PC-3 (cell line): ENCODE measurements at regions of chr7 and their contacts with region 1.

Region 1: DNA sequence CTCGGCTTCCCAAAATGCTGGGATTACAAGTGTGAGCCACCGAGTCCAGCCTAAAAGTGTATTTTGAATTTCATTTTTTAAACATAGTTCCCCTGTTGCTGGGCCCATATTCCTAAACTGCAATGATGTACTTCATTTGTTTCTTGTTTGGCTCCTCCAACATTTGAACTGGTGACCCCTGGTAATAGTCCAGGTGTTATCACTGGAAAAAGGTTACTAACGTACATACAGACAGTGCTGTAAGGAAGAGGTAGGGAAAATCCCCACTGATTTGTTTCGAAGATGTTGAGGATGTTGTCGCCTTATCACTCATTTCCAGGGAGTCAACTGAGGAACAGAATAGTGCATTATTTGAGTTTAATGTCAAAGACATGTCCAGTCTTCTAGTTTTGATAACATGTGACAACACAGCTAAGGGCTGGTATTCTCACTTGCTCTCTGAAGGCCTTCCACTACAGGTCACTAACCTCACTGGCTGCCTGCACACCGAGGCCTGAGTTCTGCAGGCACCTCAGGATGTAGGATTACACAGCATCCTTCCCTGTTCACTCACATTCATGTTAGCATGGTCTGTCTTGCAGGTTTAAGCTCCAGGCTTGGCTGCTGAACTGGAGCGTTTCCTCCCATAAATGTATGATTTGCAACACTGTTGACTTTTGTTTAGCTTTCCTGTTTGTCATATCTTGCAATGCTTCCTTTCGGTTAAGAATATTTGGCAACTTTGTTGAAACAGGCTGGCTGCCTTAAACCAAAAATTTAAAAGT is 362.8 kb downstream of the INHBA start:
- DNase-seq: peak; percentile 83
- ATAC-seq: peak; percentile 99
- H3K4me3 ChIP-seq: no peak overlapping the region
- H3K27ac ChIP-seq: peak overlapping the region; percentile 73
- H3K4me1 ChIP-seq: peaks cover 21% of the 10 kb centered on the region
- H3K27me3 ChIP-seq: no peaks in the 10 kb centered on the region
- CTCF ChIP-seq: no peak

Region 2: DNA sequence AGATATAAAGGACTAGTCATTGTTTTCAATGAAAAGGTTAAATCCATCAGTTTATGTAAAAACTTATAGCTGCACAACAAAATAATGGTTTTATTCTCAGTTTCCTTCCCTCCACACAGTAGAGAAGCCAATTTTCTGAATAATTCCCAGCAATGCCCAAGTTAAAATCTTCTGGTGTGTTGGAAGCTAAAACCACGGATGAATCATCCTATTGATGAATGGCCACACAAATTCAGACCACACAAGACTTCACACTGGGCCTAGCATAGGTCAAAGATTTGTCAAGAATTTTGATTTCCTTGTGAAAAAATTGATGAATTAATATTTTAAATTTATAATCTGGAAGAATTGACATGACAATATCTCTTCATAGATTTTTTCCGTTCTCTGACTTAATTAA is 254.9 kb before region 1 on chr7:
- CTCF ChIA-PET with region 1: no interaction called
- POLR2A ChIA-PET with region 1: no interaction called
- intact Hi-C with region 1: no loop called
- DNase-seq: peak; percentile 51
- ATAC-seq: peak; percentile 65
- H3K4me3 ChIP-seq: no peak overlapping the region
- H3K27ac ChIP-seq: no peak overlapping the region
- H3K4me1 ChIP-seq: no peaks in the 10 kb centered on the region
- H3K27me3 ChIP-seq: no peaks in the 10 kb centered on the region
- CTCF ChIP-seq: no peak

Region 3: DNA sequence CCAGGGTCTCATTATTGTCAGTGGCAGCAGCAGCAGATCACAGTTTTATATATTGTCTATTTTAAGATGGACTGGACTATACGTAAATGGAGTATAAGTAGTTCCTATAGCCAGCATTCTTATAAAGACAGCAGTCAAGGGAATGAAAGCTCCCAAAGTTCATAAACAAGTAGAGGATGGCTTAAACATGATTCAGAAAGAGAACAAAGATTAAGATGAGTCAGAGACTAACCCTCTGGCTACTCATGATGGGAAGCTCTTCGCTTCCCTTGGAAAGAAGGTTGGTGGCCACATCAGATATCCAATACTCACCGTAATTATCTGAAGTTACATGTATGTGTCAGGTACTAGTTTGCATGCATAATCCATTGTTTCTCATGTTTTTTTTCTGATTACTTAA is 85.8 kb after region 1 on chr7:
- CTCF ChIA-PET with region 1: no interaction called
- POLR2A ChIA-PET with region 1: no interaction called
- intact Hi-C with region 1: loop called (anchors 2 kb)
- DNase-seq: peak; percentile 89
- ATAC-seq: peak; percentile 98
- H3K4me3 ChIP-seq: no peak overlapping the region
- H3K27ac ChIP-seq: peak overlapping the region; percentile 86
- H3K4me1 ChIP-seq: peaks cover 22% of the 10 kb centered on the region
- H3K27me3 ChIP-seq: no peaks in the 10 kb centered on the region
- CTCF ChIP-seq: no peak

Region 4: DNA sequence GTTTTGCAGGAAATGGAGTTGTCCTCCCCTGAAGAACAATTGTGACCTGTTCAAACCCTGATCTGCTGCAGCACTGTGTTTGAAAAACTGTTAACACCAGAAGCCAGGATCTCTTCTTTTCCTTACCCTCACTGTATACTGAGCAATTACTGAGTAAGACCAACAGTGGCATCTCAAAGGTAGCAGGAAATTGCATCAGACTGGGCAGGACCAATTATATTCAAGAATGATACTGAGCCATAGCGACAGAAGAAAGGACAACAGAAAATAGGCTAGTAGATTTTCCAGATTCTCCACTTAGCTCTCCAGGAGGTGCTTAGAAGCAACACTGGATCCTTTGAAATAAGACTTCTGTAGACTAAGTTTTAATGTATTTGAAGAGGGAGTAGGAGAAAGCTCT is 420.2 kb after region 1 on chr7:
- CTCF ChIA-PET with region 1: no interaction called
- POLR2A ChIA-PET with region 1: no interaction called
- intact Hi-C with region 1: no loop called
- DNase-seq: no peak
- ATAC-seq: no peak
- H3K4me3 ChIP-seq: no peak overlapping the region
- H3K27ac ChIP-seq: no peak overlapping the region
- H3K4me1 ChIP-seq: no peaks in the 10 kb centered on the region
- H3K27me3 ChIP-seq: no peaks in the 10 kb centered on the region
- CTCF ChIP-seq: no peak